HEK293 (cell line): ENCODE measurements at regions of chr5 and their contacts with region 1.

Region 1: DNA sequence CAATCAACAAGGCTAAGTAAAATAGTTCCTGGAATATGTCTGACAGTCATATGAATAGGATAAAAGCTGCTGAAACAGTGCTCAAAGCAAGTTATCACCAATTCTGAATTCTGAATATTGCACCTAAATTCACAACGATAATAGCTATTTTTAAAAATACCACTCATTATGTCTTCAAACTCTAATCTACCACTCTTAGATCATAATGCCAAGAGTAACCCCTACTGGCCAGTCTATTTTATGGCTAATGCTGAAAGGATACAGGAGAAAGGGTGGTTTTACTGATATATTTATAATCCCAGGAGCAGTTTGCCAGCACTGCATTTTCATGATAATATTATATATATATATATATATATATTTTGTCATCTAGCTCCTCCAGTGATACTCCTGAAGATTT is 232.8 kb downstream of the PDE4D start:
- H3K4me3 ChIP-seq: no peak overlapping the region
- H3K27ac ChIP-seq: no peak overlapping the region
- H3K4me1 ChIP-seq: peaks cover 2% of the 10 kb centered on the region; the same call in 1 of the 2 replicates
- CTCF ChIP-seq: no peak

Region 2: GRCh38 chr5:59390074-59390659 is 270.6 kb before region 1 on chr5:
- CTCF ChIA-PET with region 1: interaction called, 23 read pairs
- POLR2A ChIA-PET with region 1: no interaction called
- H3K4me3 ChIP-seq: no peak overlapping the region
- H3K27ac ChIP-seq: no peak overlapping the region
- H3K4me1 ChIP-seq: no peaks in the 10 kb centered on the region
- CTCF ChIP-seq: no peak; the same call in 1 of the 2 replicates

Region 3: DNA sequence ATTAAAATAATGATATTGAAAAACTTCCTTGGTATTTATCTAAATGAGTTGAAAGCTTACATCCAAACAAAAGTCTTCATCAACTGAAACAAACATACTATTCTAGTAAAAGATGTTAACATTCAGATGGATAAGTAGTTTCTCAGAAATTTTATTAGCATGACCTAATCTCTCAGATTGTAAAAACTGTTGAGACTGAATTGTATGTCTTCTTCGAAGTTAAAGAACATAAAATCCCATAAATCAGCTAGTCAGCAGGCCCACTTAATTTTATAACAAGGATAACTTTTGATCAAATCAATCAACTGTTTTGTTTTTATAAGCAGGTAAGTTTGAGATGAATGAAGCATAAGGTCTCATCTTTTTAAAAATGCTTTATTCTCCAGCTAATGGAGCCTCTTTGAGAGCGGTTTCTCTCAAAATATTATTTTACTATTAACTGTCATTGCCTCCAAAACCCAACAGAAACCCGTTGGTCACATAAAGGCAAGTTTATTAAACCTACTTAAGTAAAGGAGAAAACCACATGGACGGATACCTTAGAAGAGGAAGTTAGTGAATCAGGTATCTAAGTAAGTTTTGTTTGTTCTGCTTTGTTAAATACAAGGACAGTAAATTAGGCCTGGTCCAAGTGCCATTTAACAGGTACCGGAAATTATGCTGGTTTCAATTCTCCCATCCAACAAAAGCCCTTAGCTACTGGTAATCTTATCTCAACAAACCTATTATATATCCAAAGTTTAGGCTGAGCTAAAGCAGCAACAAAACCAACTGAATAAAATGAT is 224.2 kb before region 1 on chr5:
- CTCF ChIA-PET with region 1: no interaction called
- POLR2A ChIA-PET with region 1: no interaction called
- H3K4me3 ChIP-seq: no peak overlapping the region
- H3K27ac ChIP-seq: no peak overlapping the region
- H3K4me1 ChIP-seq: no peaks in the 10 kb centered on the region
- CTCF ChIP-seq: no peak

Region 4: GRCh38 chr5:59506285-59506877 is 154.4 kb before region 1 on chr5:
- CTCF ChIA-PET with region 1: interaction called, 83 read pairs
- POLR2A ChIA-PET with region 1: no interaction called
- H3K4me3 ChIP-seq: no peak overlapping the region
- H3K27ac ChIP-seq: no peak overlapping the region
- H3K4me1 ChIP-seq: no peaks in the 10 kb centered on the region
- CTCF ChIP-seq: 0 out of 2 replicates have a peak, but pooled peaks have one; percentile 23

Region 5: GRCh38 chr5:59569608-59570334 is 91.0 kb before region 1 on chr5:
- CTCF ChIA-PET with region 1: interaction called, 14 read pairs
- POLR2A ChIA-PET with region 1: no interaction called
- H3K4me3 ChIP-seq: no peak overlapping the region
- H3K27ac ChIP-seq: no peak overlapping the region
- H3K4me1 ChIP-seq: peaks cover 4% of the 10 kb centered on the region
- CTCF ChIP-seq: no peak

Region 6: GRCh38 chr5:59673438-59674058 is 12.8 kb after region 1 on chr5:
- CTCF ChIA-PET with region 1: interaction called, 38 read pairs
- POLR2A ChIA-PET with region 1: no interaction called
- H3K4me3 ChIP-seq: no peak overlapping the region
- H3K27ac ChIP-seq: no peak overlapping the region
- H3K4me1 ChIP-seq: no peaks in the 10 kb centered on the region; the same call in 1 of the 2 replicates
- CTCF ChIP-seq: peak; percentile 19; the same call in 1 of the 2 replicates

Region 7: GRCh38 chr5:59799668-59800346 is 139.1 kb after region 1 on chr5:
- CTCF ChIA-PET with region 1: interaction called, 10 read pairs
- POLR2A ChIA-PET with region 1: no interaction called
- H3K4me3 ChIP-seq: no peak overlapping the region
- H3K27ac ChIP-seq: no peak overlapping the region
- H3K4me1 ChIP-seq: peaks cover 15% of the 10 kb centered on the region
- CTCF ChIP-seq: peak; percentile 68